Activated CD4-positive, alpha-beta memory T cell treated with anti-CD3 and anti-CD28 coated beads for 36 hours (primary cell): ENCODE measurements at regions of chr12 and their contacts with region 1.

Region 1: DNA sequence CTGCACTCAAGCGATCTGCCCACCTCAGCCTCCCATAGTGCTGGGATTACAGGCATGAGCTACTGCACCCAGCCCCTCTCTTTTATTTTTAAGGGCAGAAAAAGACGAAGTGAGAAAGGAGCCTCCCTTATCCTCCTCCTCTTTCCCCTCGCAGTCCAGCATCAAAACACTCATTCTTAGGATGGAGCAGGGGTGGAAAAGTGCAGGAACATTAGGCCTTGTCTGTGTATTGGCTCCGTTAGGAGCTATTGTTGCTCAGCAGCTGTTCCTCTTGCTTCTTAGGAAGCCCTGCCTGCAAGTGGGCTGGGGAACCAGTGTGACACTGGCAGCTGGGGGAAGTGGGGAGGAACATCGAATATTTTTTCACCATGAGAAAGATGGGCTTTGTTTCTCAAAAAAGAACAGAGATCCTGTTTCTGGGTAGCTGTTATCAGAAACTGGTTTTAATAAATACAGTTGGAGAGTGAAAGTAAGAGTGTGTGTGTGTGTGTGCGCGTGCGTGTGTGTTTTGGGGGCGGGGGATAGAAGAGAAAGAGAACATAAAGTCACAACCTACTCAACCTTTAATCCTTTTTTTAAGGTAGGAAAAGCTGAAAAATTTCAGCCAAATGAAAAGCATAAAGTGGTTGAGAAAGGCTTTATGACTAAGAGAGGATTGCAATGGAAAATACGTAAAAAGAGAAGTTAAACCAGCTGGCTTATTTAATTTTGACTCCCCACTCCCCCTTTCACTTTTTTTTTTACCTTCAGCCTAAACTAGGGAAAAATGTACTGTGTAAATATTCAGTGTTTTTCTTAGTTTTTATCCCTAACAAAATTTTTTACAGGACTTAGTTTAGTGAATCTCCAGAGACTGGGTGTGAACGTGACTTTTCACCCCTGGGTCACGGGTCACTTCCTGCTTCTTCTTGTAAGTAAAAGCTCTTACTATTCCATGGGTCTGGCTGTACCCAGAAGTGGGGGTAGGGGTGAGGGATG is 197.2 kb upstream of the PLEKHG7 start:
- DNase-seq: peak; percentile 75
- H3K4me3 Mint-ChIP-seq: peak overlapping the region; percentile 69
- H3K27ac Mint-ChIP-seq: peak overlapping the region; percentile 96
- H3K4me1 Mint-ChIP-seq: peaks cover 51% of the 10 kb centered on the region
- H3K27me3 Mint-ChIP-seq: no peaks in the 10 kb centered on the region

Region 2: DNA sequence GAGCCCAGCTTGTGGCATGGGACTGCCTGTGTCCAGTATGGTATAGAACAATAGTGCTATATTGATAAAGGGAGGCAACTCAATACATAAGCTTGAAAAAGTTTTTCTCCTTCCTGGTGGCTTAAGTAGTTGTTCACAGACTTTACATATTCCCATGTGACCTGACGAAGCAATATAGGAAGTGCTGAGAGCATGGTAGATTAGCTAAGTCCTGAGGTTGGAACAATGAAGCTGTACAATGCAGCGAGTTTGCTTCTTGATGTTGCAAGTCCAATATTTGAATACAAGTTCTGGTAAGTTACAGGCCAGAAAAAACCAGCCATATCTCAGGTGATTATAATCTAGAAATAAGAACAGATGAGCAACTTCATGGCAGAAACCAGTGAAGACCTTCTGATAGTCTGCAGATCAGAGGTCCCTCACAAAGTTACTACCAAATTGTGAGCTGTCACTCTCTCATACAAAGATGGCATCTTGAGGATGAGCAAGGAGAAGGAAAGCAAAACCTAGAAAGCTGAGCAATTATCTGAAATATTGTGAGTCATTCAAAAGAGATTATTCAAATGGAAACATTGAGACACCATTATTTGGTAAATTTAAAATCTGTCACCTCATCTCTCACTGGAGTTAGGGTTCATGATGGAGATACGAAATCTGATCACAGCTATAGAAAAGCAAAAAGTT is 287.0 kb before region 1 on chr12:
- CTCF ChIA-PET with region 1: interaction called, 8 read pairs
- POLR2A ChIA-PET with region 1: interaction called, 4 read pairs
- intact Hi-C with region 1: loop called (anchors 5 kb)
- DNase-seq: no peak
- H3K4me3 Mint-ChIP-seq: no peak overlapping the region
- H3K27ac Mint-ChIP-seq: peak overlapping the region; percentile 74
- H3K4me1 Mint-ChIP-seq: peaks cover 23% of the 10 kb centered on the region
- H3K27me3 Mint-ChIP-seq: no peaks in the 10 kb centered on the region

Region 3: GRCh38 chr12:92259852-92260251 is 245.7 kb before region 1 on chr12:
- CTCF ChIA-PET with region 1: no interaction called
- POLR2A ChIA-PET with region 1: no interaction called
- intact Hi-C with region 1: no loop called
- DNase-seq: no peak
- H3K4me3 Mint-ChIP-seq: no peak overlapping the region
- H3K27ac Mint-ChIP-seq: no peak overlapping the region
- H3K4me1 Mint-ChIP-seq: peaks cover 11% of the 10 kb centered on the region
- H3K27me3 Mint-ChIP-seq: no peaks in the 10 kb centered on the region

Region 4: GRCh38 chr12:92414170-92415070 is 91.1 kb before region 1 on chr12:
- CTCF ChIA-PET with region 1: no interaction called
- POLR2A ChIA-PET with region 1: no interaction called
- intact Hi-C with region 1: no loop called
- DNase-seq: no peak
- H3K4me3 Mint-ChIP-seq: no peak overlapping the region
- H3K27ac Mint-ChIP-seq: peak overlapping the region; percentile 9
- H3K4me1 Mint-ChIP-seq: peaks cover 12% of the 10 kb centered on the region
- H3K27me3 Mint-ChIP-seq: no peaks in the 10 kb centered on the region

Region 5: DNA sequence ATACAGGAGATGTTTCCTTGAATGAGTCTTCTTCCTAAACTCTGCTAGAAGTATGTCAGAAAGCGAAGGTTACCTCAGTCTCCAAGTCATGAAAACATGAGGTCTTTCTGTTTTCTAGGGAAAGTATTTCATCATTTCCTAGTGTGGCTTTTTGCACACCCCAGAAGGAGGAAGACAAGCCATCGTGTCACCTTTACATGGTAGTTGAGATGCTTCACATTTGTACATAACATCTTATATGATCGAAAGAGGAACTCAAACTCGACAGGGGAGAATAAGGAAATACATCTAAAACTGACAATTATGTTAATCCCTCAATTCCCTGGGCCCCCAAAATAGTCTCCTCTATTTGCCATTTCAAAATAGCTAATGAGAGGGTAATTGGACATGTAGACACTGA is 16.8 kb before region 1 on chr12:
- CTCF ChIA-PET with region 1: interaction called, 7 read pairs
- POLR2A ChIA-PET with region 1: interaction called, 5 read pairs
- intact Hi-C with region 1: loop called (anchors 2 kb)
- DNase-seq: no peak
- H3K4me3 Mint-ChIP-seq: no peak overlapping the region
- H3K27ac Mint-ChIP-seq: no peak overlapping the region
- H3K4me1 Mint-ChIP-seq: peaks cover 27% of the 10 kb centered on the region
- H3K27me3 Mint-ChIP-seq: no peaks in the 10 kb centered on the region

Region 6: GRCh38 chr12:92539113-92539749 is 33.7 kb after region 1 on chr12:
- CTCF ChIA-PET with region 1: interaction called, 5 read pairs
- POLR2A ChIA-PET with region 1: interaction called, 3 read pairs
- intact Hi-C with region 1: loop called (anchors 1 kb)
- DNase-seq: peak; percentile 56
- H3K4me3 Mint-ChIP-seq: no peak overlapping the region
- H3K27ac Mint-ChIP-seq: peak overlapping the region; percentile 90
- H3K4me1 Mint-ChIP-seq: peaks cover 63% of the 10 kb centered on the region
- H3K27me3 Mint-ChIP-seq: no peaks in the 10 kb centered on the region

Region 7: GRCh38 chr12:92593734-92594402 is 88.3 kb after region 1 on chr12:
- CTCF ChIA-PET with region 1: interaction called, 3 read pairs
- POLR2A ChIA-PET with region 1: interaction called, 5 read pairs
- intact Hi-C with region 1: loop called (anchors 1 kb)
- DNase-seq: peak; percentile 87
- H3K4me3 Mint-ChIP-seq: peak overlapping the region; percentile 25
- H3K27ac Mint-ChIP-seq: peak overlapping the region; percentile 92
- H3K4me1 Mint-ChIP-seq: peaks cover 80% of the 10 kb centered on the region
- H3K27me3 Mint-ChIP-seq: no peaks in the 10 kb centered on the region

Region 8: GRCh38 chr12:92928962-92929915 is 423.7 kb after region 1 on chr12 and contains the start of gene EEA1:
- CTCF ChIA-PET with region 1: no interaction called
- POLR2A ChIA-PET with region 1: no interaction called
- intact Hi-C with region 1: loop called (anchors 10 kb)
- DNase-seq: peak; percentile 98
- H3K4me3 Mint-ChIP-seq: peak within 1 kb of the TSS; percentile 85
- H3K27ac Mint-ChIP-seq: peak within 1 kb of the TSS; percentile 95
- H3K4me1 Mint-ChIP-seq: peaks cover 32% of the 10 kb centered on the region
- H3K27me3 Mint-ChIP-seq: no peaks in the 10 kb centered on the region
- total RNA-seq, gene EEA1: 17.5 to 17.7 TPM